ENCODE measurements at regions of chr10 and their contacts with region 1.

Region 1: DNA sequence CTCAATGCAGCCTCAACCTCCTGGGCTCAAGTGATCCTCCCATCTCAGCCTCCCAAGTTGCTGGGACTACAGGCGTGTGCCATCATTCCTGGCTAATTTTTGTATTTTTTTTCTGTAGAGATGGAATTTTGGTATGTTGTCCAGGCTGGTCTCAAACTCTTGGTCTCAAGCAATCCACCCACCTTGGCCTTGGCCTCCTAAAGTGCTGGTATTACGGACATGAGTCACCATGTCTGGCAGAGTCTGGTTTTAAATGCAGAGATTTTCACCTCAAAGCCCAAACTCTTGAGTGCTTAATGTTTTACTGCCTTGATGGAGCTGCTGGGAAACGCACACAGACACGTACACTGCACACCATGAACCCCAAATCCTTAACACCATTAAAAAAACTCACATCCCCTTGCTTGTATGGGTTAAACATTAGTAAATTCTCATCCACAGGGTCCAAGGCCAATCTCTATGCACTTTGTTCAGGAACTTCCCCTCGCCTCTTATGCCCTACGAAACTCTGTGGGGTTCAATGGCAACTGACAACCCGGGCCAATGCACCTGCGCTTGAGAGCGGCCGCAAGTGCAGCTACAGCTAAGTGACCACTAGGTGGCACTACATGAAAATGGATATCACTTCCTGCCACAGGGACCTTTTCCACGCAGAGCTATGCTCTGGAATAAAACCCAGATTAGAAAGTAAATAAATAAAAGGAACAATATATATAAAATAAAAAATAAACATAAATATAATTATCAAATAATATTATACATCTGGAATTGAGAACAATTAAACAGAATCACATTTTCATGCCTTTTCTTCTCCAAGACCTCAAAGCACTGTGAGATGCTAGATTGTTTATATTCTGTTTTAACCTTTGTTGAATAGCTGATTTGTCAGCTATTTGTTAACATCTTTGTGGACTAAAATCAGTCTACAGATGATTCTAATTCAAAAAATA is 66.9 kb upstream of the AFAP1L2 start:
- DNase-seq: peak; percentile 53
- H3K4me3 ChIP-seq: no peak overlapping the region
- H3K27ac ChIP-seq: no peak overlapping the region
- H3K4me1 ChIP-seq: no peaks in the 10 kb centered on the region
- H3K27me3 ChIP-seq: no peaks in the 10 kb centered on the region
- CTCF ChIP-seq: peak; percentile 79 to 95 (median 84)
- POLR2A ChIP-seq: no peak

Region 2: DNA sequence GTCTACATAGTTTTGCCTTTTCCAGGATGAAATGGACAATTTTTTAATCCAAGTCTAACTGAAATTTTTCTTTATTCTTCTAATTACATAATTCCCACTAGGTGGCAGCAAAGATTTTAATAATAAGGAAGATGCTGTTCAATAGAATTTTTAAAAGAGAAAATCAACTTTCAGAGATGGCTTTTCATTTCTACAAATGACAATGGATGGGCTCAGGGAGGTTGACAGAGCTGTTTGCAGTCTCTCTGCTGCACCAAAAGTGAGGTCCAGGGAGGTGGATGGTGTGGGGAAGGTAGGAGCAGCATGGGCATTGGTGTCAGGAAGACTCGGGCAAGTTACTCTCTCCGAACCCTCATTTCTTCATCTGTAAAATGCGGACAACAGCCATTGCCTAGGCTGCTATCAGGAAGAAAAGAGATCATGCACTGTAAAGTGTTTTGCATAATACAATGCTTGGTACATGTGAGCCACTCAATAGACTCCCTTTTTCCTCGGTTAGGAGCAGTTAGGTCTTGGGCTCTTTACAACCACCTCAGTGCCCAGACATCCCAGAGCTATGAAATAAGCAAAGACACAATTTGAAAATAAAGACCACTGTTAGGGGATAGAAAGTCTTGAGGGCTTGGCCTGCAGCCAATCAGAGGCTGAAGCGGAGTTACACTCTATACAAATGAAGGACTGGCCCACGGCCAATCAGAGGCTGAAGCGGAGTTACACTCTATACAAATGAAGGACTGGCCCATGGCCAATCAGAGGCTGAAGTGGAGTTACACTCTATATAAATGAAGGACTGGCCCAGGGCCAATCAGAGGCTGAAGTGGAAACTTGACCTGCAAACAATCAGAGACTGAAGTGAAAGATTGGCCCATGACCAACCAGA is 79.8 kb after region 1 on chr10:
- intact Hi-C with region 1: loop called (anchors 2 kb)
- DNase-seq: no peak
- H3K4me3 ChIP-seq: no peak overlapping the region
- H3K27ac ChIP-seq: no peak overlapping the region
- H3K4me1 ChIP-seq: no peaks in the 10 kb centered on the region
- H3K27me3 ChIP-seq: no peaks in the 10 kb centered on the region
- CTCF ChIP-seq: peak; percentile 19 to 69 (median 58)
- POLR2A ChIP-seq: no peak

Region 3: GRCh38 chr10:114703377-114704107 is 232.3 kb after region 1 on chr10:
- intact Hi-C with region 1: loop called (anchors 10 kb)
- DNase-seq: no peak
- H3K4me3 ChIP-seq: no peak overlapping the region
- H3K27ac ChIP-seq: no peak overlapping the region
- H3K4me1 ChIP-seq: no peaks in the 10 kb centered on the region
- H3K27me3 ChIP-seq: no peaks in the 10 kb centered on the region
- CTCF ChIP-seq: peak in 3 of 4 experiments; percentile 21 to 70 (median 42)
- POLR2A ChIP-seq: no peak

Region 4: DNA sequence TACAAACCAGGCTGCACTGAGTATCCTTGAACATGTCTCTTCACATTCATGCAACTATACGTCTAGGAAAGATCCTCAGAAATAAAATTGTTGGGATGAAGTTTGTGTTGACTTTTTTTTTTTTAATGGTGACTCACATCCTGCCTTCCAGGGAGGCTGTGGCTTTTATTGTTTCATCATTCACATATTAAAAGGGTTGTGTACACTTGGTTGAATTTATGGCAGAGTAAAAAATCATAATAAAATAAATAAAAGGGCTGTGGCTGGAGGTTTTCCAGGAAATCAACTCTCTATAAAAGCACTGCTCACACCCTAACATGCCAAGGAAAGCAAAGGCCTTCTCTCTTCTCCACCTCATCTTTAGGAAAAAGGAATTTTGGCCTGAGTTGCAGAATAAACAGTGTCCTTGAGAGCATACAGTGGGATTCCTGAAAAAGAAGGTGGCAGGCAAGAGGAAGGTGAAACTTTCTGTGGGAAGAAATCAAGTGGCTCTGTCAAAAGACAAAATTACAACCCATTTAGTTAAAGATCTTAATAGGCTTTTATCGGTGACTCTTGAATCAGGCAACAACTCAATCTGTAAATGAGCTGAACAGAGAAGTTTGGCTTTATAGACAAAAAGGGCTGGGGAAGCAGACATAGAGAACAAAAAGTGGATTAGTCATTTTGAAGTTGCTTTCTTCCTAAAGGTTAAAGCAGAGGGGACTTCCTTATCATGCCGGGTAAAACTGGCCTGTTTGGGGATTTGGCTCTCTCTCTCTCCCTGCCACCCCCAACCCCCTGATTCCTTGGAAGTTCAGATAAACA is 308.8 kb after region 1 on chr10:
- intact Hi-C with region 1: loop called (anchors 5 kb)
- DNase-seq: peak; percentile 73
- H3K4me3 ChIP-seq: no peak overlapping the region
- H3K27ac ChIP-seq: no peak overlapping the region
- H3K4me1 ChIP-seq: peaks cover 4% of the 10 kb centered on the region
- H3K27me3 ChIP-seq: peaks cover 6% of the 10 kb centered on the region
- CTCF ChIP-seq: no peak
- POLR2A ChIP-seq: no peak

Region 5: GRCh38 chr10:115129752-115130151 is 658.5 kb after region 1 on chr10:
- intact Hi-C with region 1: loop called (anchors 10 kb)
- DNase-seq: no peak
- H3K4me3 ChIP-seq: no peak overlapping the region
- H3K27ac ChIP-seq: no peak overlapping the region
- H3K4me1 ChIP-seq: no peaks in the 10 kb centered on the region
- H3K27me3 ChIP-seq: no peaks in the 10 kb centered on the region
- CTCF ChIP-seq: peak in 3 of 4 experiments; percentile 37 to 44 (median 39)
- POLR2A ChIP-seq: no peak

Measured in prostate gland (tissue), 2 donors.